T-cell (primary cell): ENCODE measurements at regions of chr2 and their contacts with region 1.

Region 1: DNA sequence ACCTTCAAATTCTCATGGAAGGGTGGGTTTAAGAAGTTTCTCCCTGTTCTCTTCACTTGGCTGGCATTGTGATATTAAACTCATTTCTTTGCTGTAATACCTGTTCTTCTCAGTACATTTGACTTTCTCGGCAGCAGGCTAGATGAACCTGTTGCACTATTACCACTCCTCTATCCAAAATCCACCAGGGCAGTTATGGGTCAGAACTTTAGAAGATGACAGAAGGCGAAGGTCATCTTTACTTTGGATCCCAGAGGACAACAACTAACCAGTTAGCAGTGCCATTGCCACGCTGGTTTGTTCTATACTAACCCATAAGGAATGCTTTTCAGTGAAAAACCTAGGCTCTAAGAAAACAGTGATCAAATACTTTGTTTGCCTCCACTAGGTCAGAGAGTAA is 901.0 kb downstream of the TSN start:
- DNase-seq: no peak
- ATAC-seq: no peak
- H3K4me3 ChIP-seq: no peak overlapping the region
- H3K4me3 Mint-ChIP-seq: no peak overlapping the region
- H3K27ac ChIP-seq: no peak overlapping the region
- H3K27ac Mint-ChIP-seq: no peak overlapping the region
- H3K4me1 ChIP-seq: no peaks in the 10 kb centered on the region
- H3K4me1 Mint-ChIP-seq: no peaks in the 10 kb centered on the region
- H3K27me3 ChIP-seq: peaks cover 0 to 5% of the 10 kb centered on the region in 2 experiments
- H3K27me3 Mint-ChIP-seq: no peaks in the 10 kb centered on the region

Region 2: DNA sequence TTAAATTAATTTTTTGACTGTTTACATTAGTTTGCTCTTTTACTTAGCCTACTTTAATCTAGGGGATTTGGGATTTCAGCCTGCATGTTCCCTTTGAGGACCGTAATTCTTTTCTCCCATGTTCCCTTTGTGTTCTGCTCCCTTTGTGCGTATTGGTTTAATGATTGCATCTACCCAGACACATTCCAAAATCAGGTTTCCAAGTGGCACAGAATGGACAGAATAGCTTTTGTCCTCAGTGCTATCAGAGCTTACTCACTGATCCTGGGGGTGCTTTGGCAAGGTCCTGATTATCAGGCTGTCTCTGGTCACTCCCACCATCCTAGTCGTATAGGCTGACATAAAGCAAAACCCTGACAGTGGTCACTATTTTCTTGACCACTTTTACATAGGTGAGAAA is 33.5 kb before region 1 on chr2:
- CTCF ChIA-PET with region 1: no interaction called
- POLR2A ChIA-PET with region 1: no interaction called
- DNase-seq: no peak
- ATAC-seq: no peak
- H3K4me3 ChIP-seq: no peak overlapping the region
- H3K4me3 Mint-ChIP-seq: no peak overlapping the region
- H3K27ac ChIP-seq: no peak overlapping the region
- H3K27ac Mint-ChIP-seq: no peak overlapping the region
- H3K4me1 ChIP-seq: no peaks in the 10 kb centered on the region
- H3K4me1 Mint-ChIP-seq: no peaks in the 10 kb centered on the region
- H3K27me3 ChIP-seq: no peaks in the 10 kb centered on the region
- H3K27me3 Mint-ChIP-seq: no peaks in the 10 kb centered on the region

Region 3: DNA sequence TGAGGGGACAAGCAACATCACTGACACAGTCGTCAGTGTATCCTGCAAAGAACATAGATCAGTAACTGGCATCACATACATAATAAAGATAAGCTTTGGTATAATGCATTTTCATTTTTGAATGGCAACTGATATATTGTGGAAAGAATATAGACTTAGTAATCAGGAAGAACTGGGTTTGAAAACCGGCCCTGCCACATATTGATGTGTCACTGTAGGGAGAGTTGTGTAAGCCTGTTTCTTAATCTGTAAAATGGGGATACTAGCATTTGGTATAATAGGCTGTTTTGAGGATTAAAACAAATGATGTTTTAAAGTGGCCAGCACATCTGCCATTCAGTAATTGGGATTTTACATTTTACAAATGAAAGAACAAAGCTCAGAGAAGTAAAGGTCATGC is 1090.9 kb after region 1 on chr2:
- CTCF ChIA-PET with region 1: no interaction called
- POLR2A ChIA-PET with region 1: interaction called in 1 of 2 experiments, 23 read pairs
- DNase-seq: no peak
- ATAC-seq: no peak
- H3K4me3 ChIP-seq: no peak overlapping the region
- H3K4me3 Mint-ChIP-seq: no peak overlapping the region
- H3K27ac ChIP-seq: no peak overlapping the region
- H3K27ac Mint-ChIP-seq: no peak overlapping the region
- H3K4me1 ChIP-seq: no peaks in the 10 kb centered on the region
- H3K4me1 Mint-ChIP-seq: no peaks in the 10 kb centered on the region
- H3K27me3 ChIP-seq: no peaks in the 10 kb centered on the region
- H3K27me3 Mint-ChIP-seq: no peaks in the 10 kb centered on the region